ENCODE measurements at regions of chr15 and their contacts with region 1.

Region 1: DNA sequence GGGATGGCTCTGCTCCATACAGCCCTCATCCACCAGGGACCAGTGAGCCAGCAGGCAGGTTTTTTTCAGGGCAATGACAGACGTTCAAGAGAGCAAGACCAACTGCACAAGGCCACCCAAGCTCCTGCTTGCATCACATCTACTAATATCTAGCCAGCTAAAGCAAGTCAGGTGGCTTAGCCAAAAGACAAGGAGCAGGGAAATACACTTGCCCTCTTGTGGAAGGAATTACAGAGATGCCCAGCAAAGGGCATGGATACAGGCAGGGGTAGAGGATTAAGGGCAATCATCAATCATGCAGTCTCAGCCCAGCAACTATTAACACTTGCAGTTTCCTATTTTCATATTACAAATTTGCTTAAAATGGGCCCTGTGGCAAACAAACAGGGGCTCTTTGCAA is 81.5 kb upstream of the NTRK3 start:
- DNase-seq: no peak
- ATAC-seq: peak in 1 of 4 donors; percentile 33
- H3K4me3 ChIP-seq: no peak overlapping the region
- H3K27ac ChIP-seq: no peak overlapping the region
- H3K4me1 ChIP-seq: no peaks in the 10 kb centered on the region
- H3K27me3 ChIP-seq: no peaks in the 10 kb centered on the region
- CTCF ChIP-seq: no peak
- POLR2A ChIP-seq: no peak

Region 2: GRCh38 chr15:88447206-88447605 is 109.2 kb after region 1 on chr15:
- intact Hi-C with region 1: loop called in 1 of 10 experiments (anchors 5 kb)
- DNase-seq: no peak
- ATAC-seq: no peak
- H3K4me3 ChIP-seq: no peak overlapping the region
- H3K27ac ChIP-seq: no peak overlapping the region
- H3K4me1 ChIP-seq: no peaks in the 10 kb centered on the region
- H3K27me3 ChIP-seq: no peaks in the 10 kb centered on the region
- CTCF ChIP-seq: no peak
- POLR2A ChIP-seq: no peak

Measured in heart left ventricle (tissue), 16 donors.